Heart left ventricle (tissue), 16 donors: ENCODE measurements at regions of chr21 and their contacts with region 1.

Region 1: GRCh38 chr21:44051462-44051941 is 39.4 kb downstream of the TRAPPC10 start:
- DNase-seq: peak; percentile 32 to 79 (median 70)
- ATAC-seq: peak; percentile 20 to 86 (median 74)
- H3K4me3 ChIP-seq: peak overlapping the region in 1 of 12 donors; percentile 5
- H3K27ac ChIP-seq: peak overlapping the region; percentile 12 to 85 (median 50)
- H3K4me1 ChIP-seq: peaks cover 0 to 42% (median 26%) of the 10 kb centered on the region in 12 donors
- H3K27me3 ChIP-seq: no peaks in the 10 kb centered on the region
- CTCF ChIP-seq: no peak
- POLR2A ChIP-seq: no peak

Region 2: DNA sequence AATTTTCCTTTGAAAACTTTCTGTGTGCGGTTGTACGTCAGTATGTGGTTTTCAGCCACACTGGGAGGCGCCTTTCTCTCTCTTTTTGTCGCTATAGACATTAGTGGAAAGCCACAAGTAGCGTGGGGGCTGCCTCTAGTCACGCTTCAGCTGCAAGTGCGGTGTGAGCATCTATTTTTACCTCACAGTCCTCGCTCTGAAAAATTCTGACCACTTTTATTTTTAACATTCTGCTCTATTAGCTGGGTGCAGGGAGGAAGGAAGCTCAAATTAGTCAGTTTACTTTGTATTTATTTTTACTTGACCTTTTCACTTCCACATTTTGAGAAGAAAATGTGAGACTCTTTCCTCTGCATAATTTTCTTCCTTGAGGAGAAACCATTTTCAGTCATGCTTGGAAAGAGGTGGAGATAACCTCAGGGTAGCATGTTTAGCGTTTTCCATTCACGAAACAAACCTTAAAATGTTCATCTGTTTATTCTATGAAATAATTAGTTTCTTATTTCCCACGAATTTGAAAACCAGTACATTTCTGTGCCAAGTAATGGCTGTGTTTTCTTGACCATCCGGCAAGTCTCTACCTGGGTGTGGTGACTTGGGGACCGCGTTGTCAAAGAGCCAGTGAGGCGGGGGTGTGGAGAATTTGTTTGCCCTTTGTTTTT is 1058.5 kb after region 1 on chr21:
- intact Hi-C with region 1: loop called in 1 of 10 experiments (anchors 5 kb)
- DNase-seq: peak in 1 of 5 donors; percentile 48
- ATAC-seq: peak; percentile 18 to 69 (median 24)
- H3K4me3 ChIP-seq: peak overlapping the region in 9 of 12 donors; percentile 4 to 33 (median 22)
- H3K27ac ChIP-seq: peak overlapping the region in 11 of 12 donors; percentile 25 to 83 (median 71)
- H3K4me1 ChIP-seq: peaks cover 6 to 78% (median 70%) of the 10 kb centered on the region in 12 donors
- H3K27me3 ChIP-seq: no peaks in the 10 kb centered on the region
- CTCF ChIP-seq: no peak
- POLR2A ChIP-seq: no peak